ENCODE measurements at regions of chr2 and their contacts with region 1.

Region 1: DNA sequence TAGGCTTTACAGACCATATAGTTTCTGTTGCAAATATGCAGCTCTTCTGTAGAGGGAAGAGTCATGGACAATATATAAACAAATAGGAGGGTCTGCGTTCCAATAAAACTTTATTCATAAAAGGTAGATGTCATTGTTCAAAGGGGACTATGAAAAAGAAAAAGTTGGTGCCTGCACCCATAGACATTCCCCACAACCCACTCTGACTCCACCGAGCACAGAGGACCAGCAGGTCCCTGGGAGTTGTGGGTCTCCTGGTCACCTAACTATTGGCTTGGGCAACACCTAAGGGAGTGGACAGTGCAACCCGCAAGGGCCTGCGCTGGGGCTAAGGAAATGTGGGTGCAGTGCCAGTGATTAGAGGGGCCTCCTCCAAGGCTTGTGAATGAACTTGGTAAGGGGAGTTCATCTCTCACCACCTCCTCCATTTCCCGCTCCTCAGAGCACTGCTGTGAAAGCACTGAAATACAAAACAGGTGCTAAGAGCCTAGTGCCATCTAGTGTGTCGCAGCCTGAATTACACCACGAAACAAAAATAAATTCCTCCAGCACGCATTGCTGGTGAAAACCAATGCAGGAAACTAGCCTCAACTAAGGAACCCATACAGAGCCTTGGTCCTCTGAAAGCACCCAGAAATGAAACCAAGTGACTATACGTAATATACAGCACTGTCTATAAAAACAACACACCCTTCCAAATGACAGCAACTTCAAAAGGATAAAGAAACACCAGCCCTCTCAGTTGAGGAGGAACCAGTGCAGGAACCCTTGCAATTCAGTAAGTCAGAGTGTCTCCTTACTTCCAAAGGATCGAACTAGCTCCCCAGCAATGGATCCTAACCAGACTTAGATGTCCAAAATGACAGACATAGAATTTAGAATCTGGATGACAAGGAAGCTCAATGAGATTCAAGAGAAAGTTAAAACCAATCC is 166.6 kb downstream of the RNF144A start:
- DNase-seq: no peak
- ATAC-seq: peak; percentile 78
- H3K4me3 ChIP-seq: no peak overlapping the region
- H3K27ac ChIP-seq: no peak overlapping the region
- H3K4me1 ChIP-seq: no peaks in the 10 kb centered on the region
- H3K27me3 ChIP-seq: peaks cover 0 to 3% of the 10 kb centered on the region in 2 experiments; a peak in 1 of 4 replicates
- CTCF ChIP-seq: peak; percentile 47 to 67 (median 51)
- EP300 ChIP-seq: no peak
- POLR2A ChIP-seq: no peak
- RAD21 ChIP-seq: peak; percentile 68

Region 2: GRCh38 chr2:6723865-6724604 is 359.8 kb before region 1 on chr2:
- CTCF ChIA-PET with region 1: no interaction called
- POLR2A ChIA-PET with region 1: no interaction called
- RAD21 ChIA-PET with region 1: no interaction called
- SMC1A ChIA-PET with region 1: no interaction called
- in situ Hi-C with region 1: no loop called
- intact Hi-C with region 1: no loop called
- DNase-seq: no peak
- ATAC-seq: no peak
- H3K4me3 ChIP-seq: no peak overlapping the region
- H3K27ac ChIP-seq: no peak overlapping the region
- H3K4me1 ChIP-seq: no peaks in the 10 kb centered on the region
- H3K27me3 ChIP-seq: no peaks in the 10 kb centered on the region
- CTCF ChIP-seq: no peak
- EP300 ChIP-seq: no peak
- POLR2A ChIP-seq: no peak
- RAD21 ChIP-seq: no peak

Region 3: DNA sequence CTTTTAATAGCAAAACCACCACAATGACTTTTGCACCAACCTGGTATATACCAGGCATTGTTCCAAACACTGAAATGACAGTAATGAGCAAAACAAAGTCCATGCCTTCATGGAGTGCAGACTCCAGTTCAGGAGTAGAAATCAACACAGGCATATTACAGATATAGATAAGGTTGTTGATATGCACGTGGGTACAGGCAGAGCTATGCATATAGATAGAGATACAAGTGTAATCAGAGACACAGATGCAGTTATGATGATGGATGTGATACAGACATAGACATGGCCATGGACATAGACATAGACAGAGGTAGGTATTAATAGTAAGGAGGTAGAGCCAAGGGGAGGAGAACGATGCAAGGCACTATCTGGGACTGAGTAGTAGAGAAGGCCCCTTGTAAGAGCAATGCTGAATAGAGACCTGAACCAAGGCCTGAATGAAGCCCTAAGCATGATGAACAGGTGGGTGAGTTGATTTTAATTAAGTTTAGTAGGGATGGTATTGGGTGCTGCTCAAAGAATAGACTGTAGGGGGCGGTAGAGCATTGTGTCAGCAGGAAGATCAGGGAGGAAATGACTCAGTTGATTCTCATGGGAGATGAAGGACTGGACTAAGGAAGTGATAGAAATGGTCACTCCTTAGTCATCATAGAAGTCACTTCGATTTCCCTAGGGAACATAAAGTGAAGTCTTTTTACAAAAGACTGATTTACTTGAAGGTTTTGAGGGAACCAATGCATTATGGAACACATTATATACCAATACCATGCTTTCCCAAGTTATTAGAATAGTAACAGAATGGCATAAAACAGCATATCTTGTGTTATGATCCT is 257.5 kb before region 1 on chr2:
- CTCF ChIA-PET with region 1: interaction called, 3 read pairs
- POLR2A ChIA-PET with region 1: no interaction called
- RAD21 ChIA-PET with region 1: no interaction called
- SMC1A ChIA-PET with region 1: no interaction called
- in situ Hi-C with region 1: no loop called
- intact Hi-C with region 1: loop called (anchors 5 kb)
- DNase-seq: peak; percentile 58
- ATAC-seq: peak; percentile 97
- H3K4me3 ChIP-seq: no peak overlapping the region
- H3K27ac ChIP-seq: no peak overlapping the region
- H3K4me1 ChIP-seq: no peaks in the 10 kb centered on the region
- H3K27me3 ChIP-seq: no peaks in the 10 kb centered on the region
- CTCF ChIP-seq: peak; percentile 67 to 86 (median 70)
- EP300 ChIP-seq: peak in 1 of 2 experiments; percentile 19; a peak in 1 of 4 replicates
- POLR2A ChIP-seq: no peak
- RAD21 ChIP-seq: peak; percentile 74

Region 4: GRCh38 chr2:7037340-7038333 is 46.2 kb before region 1 on chr2:
- CTCF ChIA-PET with region 1: interaction called, 26 read pairs
- POLR2A ChIA-PET with region 1: no interaction called
- RAD21 ChIA-PET with region 1: no interaction called
- SMC1A ChIA-PET with region 1: no interaction called
- in situ Hi-C with region 1: no loop called
- intact Hi-C with region 1: loop called (anchors 1 kb)
- DNase-seq: no peak
- ATAC-seq: peak; percentile 99
- H3K4me3 ChIP-seq: no peak overlapping the region
- H3K27ac ChIP-seq: no peak overlapping the region
- H3K4me1 ChIP-seq: no peaks in the 10 kb centered on the region
- H3K27me3 ChIP-seq: no peaks in the 10 kb centered on the region
- CTCF ChIP-seq: peak; percentile 78 to 81 (median 79)
- EP300 ChIP-seq: no peak
- POLR2A ChIP-seq: no peak
- RAD21 ChIP-seq: peak; percentile 64

Region 5: GRCh38 chr2:7237466-7237865 is 153.6 kb after region 1 on chr2:
- CTCF ChIA-PET with region 1: no interaction called
- POLR2A ChIA-PET with region 1: no interaction called
- RAD21 ChIA-PET with region 1: no interaction called
- SMC1A ChIA-PET with region 1: no interaction called
- in situ Hi-C with region 1: no loop called
- intact Hi-C with region 1: no loop called
- DNase-seq: no peak
- ATAC-seq: no peak
- H3K4me3 ChIP-seq: no peak overlapping the region
- H3K27ac ChIP-seq: no peak overlapping the region
- H3K4me1 ChIP-seq: no peaks in the 10 kb centered on the region
- H3K27me3 ChIP-seq: no peaks in the 10 kb centered on the region
- CTCF ChIP-seq: no peak
- EP300 ChIP-seq: no peak
- POLR2A ChIP-seq: no peak
- RAD21 ChIP-seq: no peak